ENCODE measurements at regions of chr3 and their contacts with region 1.

Region 1: GRCh38 chr3:188365978-188366698 is 212.2 kb downstream of the LPP start:
- DNase-seq: no peak
- ATAC-seq: no peak
- H3K4me3 ChIP-seq: no peak overlapping the region
- H3K27ac ChIP-seq: no peak overlapping the region
- H3K4me1 ChIP-seq: peaks cover 26 to 39% of the 10 kb centered on the region in 2 donors
- H3K27me3 ChIP-seq: no peaks in the 10 kb centered on the region
- CTCF ChIP-seq: no peak
- POLR2A ChIP-seq: no peak

Region 2: DNA sequence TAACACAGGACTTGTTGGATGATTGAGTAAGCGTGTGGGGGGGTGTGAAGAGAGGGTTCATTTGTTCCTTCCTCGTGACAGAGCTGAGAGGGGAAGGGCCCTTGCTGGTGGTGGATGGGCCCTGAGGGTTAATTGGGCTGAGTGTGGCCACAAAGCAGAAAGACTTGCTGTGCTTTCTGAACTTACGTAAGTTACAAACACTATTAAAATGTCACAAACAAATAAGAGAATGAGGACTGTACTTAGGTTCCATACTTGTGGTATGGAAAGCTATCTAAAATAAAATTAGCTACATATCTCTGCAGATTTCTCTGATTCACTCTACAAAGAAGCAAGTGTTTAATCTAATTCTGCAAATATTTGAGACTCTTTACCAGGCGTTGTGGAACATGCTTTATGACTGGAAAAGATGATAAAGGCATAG is 19.2 kb after region 1 on chr3:
- in situ Hi-C with region 1: no loop called
- intact Hi-C with region 1: loop called (anchors 2 kb)
- DNase-seq: no peak
- ATAC-seq: no peak
- H3K4me3 ChIP-seq: no peak overlapping the region
- H3K27ac ChIP-seq: no peak overlapping the region
- H3K4me1 ChIP-seq: peaks cover 11 to 30% of the 10 kb centered on the region in 2 donors
- H3K27me3 ChIP-seq: no peaks in the 10 kb centered on the region
- CTCF ChIP-seq: no peak
- POLR2A ChIP-seq: no peak